ENCODE measurements at regions of chr14 and their contacts with region 1.

Region 1: DNA sequence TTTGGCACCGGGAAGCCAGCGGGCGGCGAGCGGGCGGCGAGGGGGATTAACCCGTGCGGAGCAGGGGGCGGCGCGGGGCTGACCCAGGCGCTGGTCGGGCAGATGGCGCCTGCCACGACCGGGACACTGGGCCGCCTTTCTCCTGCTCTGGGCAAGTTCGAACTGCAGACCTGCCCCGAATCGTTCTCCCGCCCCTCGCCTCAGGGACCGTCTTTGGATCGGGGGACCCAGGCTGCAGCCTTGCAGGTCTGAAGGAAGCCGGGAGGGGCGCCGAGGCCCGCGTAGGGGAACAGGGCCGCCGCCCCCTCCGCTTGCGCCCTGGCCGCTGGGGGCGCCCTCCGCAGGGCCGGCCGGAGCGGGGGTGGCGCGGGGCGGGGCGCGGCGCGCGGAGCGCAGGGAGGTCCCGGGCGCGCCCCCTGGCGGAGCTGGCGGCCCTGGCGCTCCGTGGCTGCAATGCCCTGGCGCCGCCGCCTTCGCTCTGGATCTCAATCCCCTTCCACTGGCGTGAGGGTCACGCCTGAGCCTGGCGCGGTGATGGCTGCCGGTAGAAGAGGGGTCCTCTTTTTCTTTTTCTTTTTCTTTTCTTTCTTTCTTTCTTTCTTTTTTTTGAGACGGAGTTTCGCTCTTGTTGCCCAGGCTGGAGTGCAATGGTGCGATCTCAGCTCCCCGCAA is 449 bp upstream of the LTBP2 start:
- DNase-seq: peak; percentile 96
- H3K4me3 Mint-ChIP-seq: peak overlapping the region; percentile 79
- H3K27ac Mint-ChIP-seq: no peak overlapping the region
- H3K4me1 Mint-ChIP-seq: peaks cover 27% of the 10 kb centered on the region
- H3K27me3 Mint-ChIP-seq: peaks cover 45% of the 10 kb centered on the region

Region 2: GRCh38 chr14:72893636-72894321 is 1718.7 kb before region 1 on chr14 and contains the start of gene DPF3:
- intact Hi-C with region 1: no loop called
- DNase-seq: peak; percentile 98
- H3K4me3 Mint-ChIP-seq: peak within 1 kb of the TSS; percentile 90
- H3K27ac Mint-ChIP-seq: peak within 1 kb of the TSS; percentile 27
- H3K4me1 Mint-ChIP-seq: peaks cover 26% of the 10 kb centered on the region
- H3K27me3 Mint-ChIP-seq: peaks cover 52% of the 10 kb centered on the region
- total RNA-seq, gene DPF3: 1.5 and 2.8 TPM in 2 replicates

Region 3: GRCh38 chr14:74362361-74362915 is 250.0 kb before region 1 on chr14:
- intact Hi-C with region 1: loop called (anchors 5 kb)
- DNase-seq: peak; percentile 89
- H3K4me3 Mint-ChIP-seq: no peak overlapping the region
- H3K27ac Mint-ChIP-seq: no peak overlapping the region
- H3K4me1 Mint-ChIP-seq: no peaks in the 10 kb centered on the region
- H3K27me3 Mint-ChIP-seq: peaks cover 11% of the 10 kb centered on the region

Region 4: DNA sequence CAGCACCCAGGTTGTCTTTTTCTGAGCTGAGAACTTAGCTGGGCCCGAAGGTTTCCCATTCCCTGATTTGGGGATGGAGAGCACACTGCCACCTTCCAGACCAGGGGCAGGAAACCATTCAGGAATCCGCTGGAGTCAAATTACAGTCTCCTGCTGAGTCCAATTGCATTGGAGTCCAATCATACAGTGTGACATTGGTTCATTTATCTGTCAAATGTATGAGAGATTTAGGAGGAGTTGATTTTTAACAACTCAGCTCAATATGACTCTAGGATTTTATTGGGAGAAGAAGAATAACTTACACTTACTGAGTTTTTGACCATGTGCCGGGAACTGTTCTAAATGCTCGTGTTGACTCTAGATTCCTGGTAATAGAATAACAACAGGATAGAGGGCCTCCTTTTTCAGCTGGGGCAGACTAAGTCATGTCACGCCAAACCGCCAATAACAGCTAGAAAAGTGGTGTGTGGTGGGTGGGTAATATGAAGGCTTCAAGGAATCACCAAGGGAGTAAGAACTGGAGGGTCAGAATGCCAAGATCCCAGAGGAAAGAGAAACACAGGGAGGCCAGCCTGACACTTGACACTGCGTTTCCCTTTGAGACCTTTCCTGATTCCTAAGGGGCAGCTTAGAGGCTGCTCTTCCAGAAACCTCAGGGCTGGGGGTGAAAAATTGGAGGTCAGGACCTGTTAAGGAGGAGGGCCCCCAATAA is 197.9 kb before region 1 on chr14:
- intact Hi-C with region 1: no loop called
- DNase-seq: no peak
- H3K4me3 Mint-ChIP-seq: no peak overlapping the region
- H3K27ac Mint-ChIP-seq: no peak overlapping the region
- H3K4me1 Mint-ChIP-seq: no peaks in the 10 kb centered on the region
- H3K27me3 Mint-ChIP-seq: peaks cover 8% of the 10 kb centered on the region

Region 5: GRCh38 chr14:74493343-74494261 is 118.9 kb before region 1 on chr14 and contains the start of gene ISCA2:
- intact Hi-C with region 1: loop called (anchors 5 kb)
- DNase-seq: peak; percentile 100
- H3K4me3 Mint-ChIP-seq: no peak within 1 kb of the TSS
- H3K27ac Mint-ChIP-seq: peak within 1 kb of the TSS; percentile 93
- H3K4me1 Mint-ChIP-seq: peaks cover 24% of the 10 kb centered on the region
- H3K27me3 Mint-ChIP-seq: peaks cover 3% of the 10 kb centered on the region
- total RNA-seq, gene ISCA2: 20.0 and 20.8 TPM in 2 replicates

Region 6: GRCh38 chr14:74630881-74631690 is 18.6 kb after region 1 on chr14:
- intact Hi-C with region 1: no loop called
- DNase-seq: no peak
- H3K4me3 Mint-ChIP-seq: no peak overlapping the region
- H3K27ac Mint-ChIP-seq: no peak overlapping the region
- H3K4me1 Mint-ChIP-seq: peaks cover 2% of the 10 kb centered on the region
- H3K27me3 Mint-ChIP-seq: peaks cover 7% of the 10 kb centered on the region

Region 7: DNA sequence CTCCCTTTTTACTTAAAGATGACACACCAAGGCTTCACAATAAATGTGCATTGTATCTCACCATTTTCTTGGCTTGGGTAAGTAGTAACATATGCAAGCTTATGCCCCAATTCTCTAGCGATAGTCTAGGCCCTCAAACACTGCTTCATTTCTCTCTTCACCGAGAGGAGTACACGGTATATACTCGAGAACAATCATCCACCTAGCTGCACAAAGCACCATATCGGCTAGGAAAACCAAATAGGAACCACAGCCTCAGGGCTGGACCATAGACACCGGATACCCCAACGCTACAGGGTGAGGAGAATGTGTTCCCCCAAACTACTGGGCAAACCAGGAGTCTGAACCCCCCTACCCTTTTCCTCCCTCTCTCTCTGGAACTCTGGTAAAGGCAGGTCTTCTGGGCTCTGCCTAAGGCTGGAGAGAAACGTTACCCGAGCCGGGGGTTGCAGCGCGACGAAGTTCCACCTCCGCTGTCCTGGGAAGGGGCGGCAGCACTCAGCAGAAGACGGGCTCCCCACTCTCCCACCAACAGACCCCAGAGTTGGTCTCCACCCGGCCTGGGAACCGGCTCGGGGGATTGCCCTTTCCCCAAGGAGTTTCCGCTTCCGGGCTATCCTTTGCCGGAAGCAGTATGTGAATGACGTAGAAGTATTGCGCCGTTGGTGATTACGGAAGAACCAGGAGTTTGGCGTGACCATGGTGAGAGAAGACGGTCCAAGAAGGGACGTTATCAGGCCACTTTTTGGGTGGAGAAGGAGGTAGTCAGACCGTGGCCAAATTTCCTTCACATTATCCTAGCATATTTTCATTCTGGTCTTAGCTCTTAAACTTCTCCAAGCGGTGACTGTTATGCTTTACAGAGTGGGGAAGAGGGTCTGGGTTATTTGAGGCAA is 100.3 kb after region 1 on chr14 and contains the starts of genes AREL1 and FCF1:
- intact Hi-C with region 1: loop called (anchors 5 kb)
- DNase-seq: peak; percentile 96
- H3K4me3 Mint-ChIP-seq: peak within 1 kb of the TSS; percentile 92
- H3K27ac Mint-ChIP-seq: peak within 1 kb of the TSS; percentile 89
- H3K4me1 Mint-ChIP-seq: peaks cover 36% of the 10 kb centered on the region
- H3K27me3 Mint-ChIP-seq: no peaks in the 10 kb centered on the region
- total RNA-seq, gene AREL1: 43.5 and 45.5 TPM in 2 replicates
- total RNA-seq, gene FCF1: 64.5 and 68.6 TPM in 2 replicates

Region 8: GRCh38 chr14:74804219-74804826 is 191.8 kb after region 1 on chr14:
- intact Hi-C with region 1: loop called (anchors 1 kb)
- DNase-seq: peak; percentile 77
- H3K4me3 Mint-ChIP-seq: no peak overlapping the region
- H3K27ac Mint-ChIP-seq: no peak overlapping the region
- H3K4me1 Mint-ChIP-seq: no peaks in the 10 kb centered on the region
- H3K27me3 Mint-ChIP-seq: no peaks in the 10 kb centered on the region